Left ventricle myocardium superior (tissue), 1 donor: ENCODE measurements at regions of chr1 and their contacts with region 1.

Region 1: DNA sequence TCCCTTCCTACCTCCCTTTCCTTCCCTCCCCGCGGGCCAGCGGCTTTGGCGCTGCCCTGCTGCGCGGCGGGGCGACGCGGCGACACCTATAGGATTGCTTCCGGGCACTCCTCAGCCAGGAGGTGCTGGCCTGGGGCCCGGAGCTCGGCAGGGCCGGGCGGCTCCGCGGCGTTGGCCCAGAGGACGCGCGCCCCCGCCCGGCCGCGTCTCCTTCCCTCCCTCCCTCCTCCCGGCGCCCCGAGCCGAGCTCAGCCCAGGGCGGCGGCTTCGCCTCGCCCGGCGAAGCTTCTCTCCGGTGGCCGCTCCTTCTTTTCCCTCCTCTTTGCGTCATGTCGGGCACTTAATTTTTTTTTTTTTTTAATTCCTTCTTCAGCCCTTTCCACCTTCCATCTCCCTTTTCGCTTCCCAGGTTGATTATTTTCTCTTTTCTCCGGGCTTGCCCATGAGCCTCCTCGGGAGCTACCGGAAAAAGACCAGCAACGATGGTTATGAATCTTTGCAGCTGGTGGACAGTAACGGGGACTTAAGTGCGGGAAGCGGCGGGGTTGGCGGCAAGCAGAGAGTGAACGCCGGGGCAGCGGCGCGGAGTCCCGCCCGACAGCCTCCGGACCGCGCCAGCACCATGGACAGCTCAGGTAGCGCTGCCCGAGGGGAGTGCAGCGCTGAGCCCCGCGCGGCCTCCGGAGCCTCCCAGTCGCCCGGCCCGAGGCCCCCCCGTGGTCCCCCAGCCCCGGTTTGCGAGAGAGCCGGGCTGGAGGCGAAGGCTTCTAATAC is at the start of gene DNAJC6:
- DNase-seq: peak; percentile 84
- ATAC-seq: peak; percentile 100
- total RNA-seq, gene DNAJC6: 3.6 TPM

Region 2: GRCh38 chr1:65254319-65255034 is 55.0 kb before region 1 on chr1:
- intact Hi-C with region 1: loop called (anchors 10 kb)
- DNase-seq: peak; percentile 91
- ATAC-seq: peak; percentile 97